ENCODE measurements at regions of chr9 and their contacts with region 1.

Region 1: GRCh38 chr9:114738581-114739316 is 56.8 kb upstream of the TEX48 start:
- DNase-seq: peak; percentile 89
- H3K4me3 ChIP-seq: no peak overlapping the region
- H3K27ac ChIP-seq: peak overlapping the region; percentile 23
- H3K4me1 ChIP-seq: peaks cover 4% of the 10 kb centered on the region
- H3K27me3 ChIP-seq: no peaks in the 10 kb centered on the region
- CTCF ChIP-seq: peak; percentile 69 to 90
- POLR2A ChIP-seq: no peak

Region 2: GRCh38 chr9:114681594-114682332 is 57.0 kb before region 1 on chr9 and contains the start of gene TEX48:
- CTCF ChIA-PET with region 1: interaction called, 17 read pairs
- POLR2A ChIA-PET with region 1: no interaction called
- dilution Hi-C with region 1: no loop called
- intact Hi-C with region 1: loop called (anchors 1 kb)
- DNase-seq: peak; percentile 52
- H3K4me3 ChIP-seq: no peak within 1 kb of the TSS
- H3K27ac ChIP-seq: no peak within 1 kb of the TSS
- H3K4me1 ChIP-seq: peaks cover 23% of the 10 kb centered on the region
- H3K27me3 ChIP-seq: no peaks in the 10 kb centered on the region
- CTCF ChIP-seq: peak; percentile 67 to 78
- POLR2A ChIP-seq: no peak
- total RNA-seq, gene TEX48: not detected in 2 replicates

Region 3: GRCh38 chr9:114779352-114779845 is 40.6 kb after region 1 on chr9:
- CTCF ChIA-PET with region 1: no interaction called
- POLR2A ChIA-PET with region 1: no interaction called
- dilution Hi-C with region 1: no loop called
- intact Hi-C with region 1: loop called (anchors 1 kb)
- DNase-seq: peak; percentile 100
- H3K4me3 ChIP-seq: no peak overlapping the region
- H3K27ac ChIP-seq: peak overlapping the region; percentile 86
- H3K4me1 ChIP-seq: peaks cover 31% of the 10 kb centered on the region
- H3K27me3 ChIP-seq: no peaks in the 10 kb centered on the region
- CTCF ChIP-seq: no peak
- POLR2A ChIP-seq: no peak

Region 4: DNA sequence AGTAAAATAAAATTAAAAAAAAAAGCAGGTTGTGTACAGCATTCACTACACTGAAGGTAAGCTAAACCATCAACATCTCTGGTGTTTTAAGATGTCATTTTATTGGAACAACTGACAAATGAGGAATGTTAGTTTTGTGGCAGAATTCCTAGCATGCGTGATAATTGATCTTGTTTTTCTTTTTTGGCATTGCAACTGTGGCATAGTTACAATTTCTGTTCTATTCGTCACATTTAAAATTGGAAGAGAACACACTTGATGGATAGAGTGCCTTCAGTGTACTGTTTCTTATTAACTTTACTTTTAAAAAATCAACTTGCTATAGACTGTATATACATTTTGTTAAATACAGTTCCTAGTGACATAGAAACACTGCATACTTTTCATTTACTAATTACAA is 110.7 kb after region 1 on chr9:
- CTCF ChIA-PET with region 1: no interaction called
- POLR2A ChIA-PET with region 1: no interaction called
- dilution Hi-C with region 1: no loop called
- intact Hi-C with region 1: no loop called
- DNase-seq: no peak
- H3K4me3 ChIP-seq: no peak overlapping the region
- H3K27ac ChIP-seq: no peak overlapping the region
- H3K4me1 ChIP-seq: peaks cover 3% of the 10 kb centered on the region
- H3K27me3 ChIP-seq: no peaks in the 10 kb centered on the region
- CTCF ChIP-seq: no peak
- POLR2A ChIP-seq: no peak

Region 5: GRCh38 chr9:114894801-114895433 is 156.2 kb after region 1 on chr9:
- CTCF ChIA-PET with region 1: interaction called, 4 read pairs
- POLR2A ChIA-PET with region 1: no interaction called
- dilution Hi-C with region 1: no loop called
- intact Hi-C with region 1: loop called (anchors 1 kb)
- DNase-seq: peak; percentile 99
- H3K4me3 ChIP-seq: peak overlapping the region in 1 of 3 experiments; percentile 16
- H3K27ac ChIP-seq: peak overlapping the region; percentile 100
- H3K4me1 ChIP-seq: peaks cover 63% of the 10 kb centered on the region
- H3K27me3 ChIP-seq: no peaks in the 10 kb centered on the region
- CTCF ChIP-seq: no peak
- POLR2A ChIP-seq: peak; percentile 62

Measured in endothelial cell of umbilical vein (primary cell).